A549 (cell line): ENCODE measurements at regions of chr4 and their contacts with region 1.

Region 1: GRCh38 chr4:48033825-48034413 is 17.3 kb downstream of the NIPAL1 start:
- DNase-seq: peak in 1 of 2 experiments; percentile 18
- ATAC-seq: peak in 1 of 2 experiments; percentile 57; a peak in 3 of 6 replicates
- H3K4me3 ChIP-seq: no peak overlapping the region
- H3K27ac ChIP-seq: no peak overlapping the region
- H3K4me1 ChIP-seq: no peaks in the 10 kb centered on the region
- CTCF ChIP-seq: peak; percentile 23; the same call in 2 of the 3 replicates
- EP300 ChIP-seq: no peak
- POLR2A ChIP-seq: no peak
- RAD21 ChIP-seq: peak in 1 of 2 experiments; percentile 24; a peak in 1 of 5 replicates

Region 2: GRCh38 chr4:46852800-46853199 is 1181.1 kb before region 1 on chr4:
- CTCF ChIA-PET with region 1: no interaction called
- POLR2A ChIA-PET with region 1: no interaction called
- DNase-seq: no peak
- ATAC-seq: no peak
- H3K4me3 ChIP-seq: no peak overlapping the region
- H3K27ac ChIP-seq: no peak overlapping the region
- H3K4me1 ChIP-seq: no peaks in the 10 kb centered on the region
- CTCF ChIP-seq: no peak
- EP300 ChIP-seq: no peak
- POLR2A ChIP-seq: no peak
- RAD21 ChIP-seq: no peak

Region 3: GRCh38 chr4:48085821-48086607 is 52.1 kb after region 1 on chr4:
- CTCF ChIA-PET with region 1: interaction called, 19 read pairs
- POLR2A ChIA-PET with region 1: no interaction called
- DNase-seq: peak in 1 of 2 experiments; percentile 11
- ATAC-seq: no peak
- H3K4me3 ChIP-seq: no peak overlapping the region
- H3K27ac ChIP-seq: no peak overlapping the region
- H3K4me1 ChIP-seq: peaks cover 6% of the 10 kb centered on the region; the same call in 1 of the 3 replicates
- CTCF ChIP-seq: no peak
- EP300 ChIP-seq: no peak
- POLR2A ChIP-seq: no peak
- RAD21 ChIP-seq: no peak

Region 4: GRCh38 chr4:48227659-48228058 is 193.7 kb after region 1 on chr4:
- CTCF ChIA-PET with region 1: no interaction called
- POLR2A ChIA-PET with region 1: no interaction called
- DNase-seq: no peak
- ATAC-seq: no peak
- H3K4me3 ChIP-seq: no peak overlapping the region
- H3K27ac ChIP-seq: no peak overlapping the region
- H3K4me1 ChIP-seq: peaks cover 9% of the 10 kb centered on the region; the same call in 2 of the 3 replicates
- CTCF ChIP-seq: no peak
- EP300 ChIP-seq: no peak
- POLR2A ChIP-seq: no peak
- RAD21 ChIP-seq: no peak